ENCODE measurements at regions of chr11 and their contacts with region 1.

Region 1: GRCh38 chr11:86174101-86175046 is 70.2 kb upstream of the EED start:
- DNase-seq: no peak
- ATAC-seq: no peak
- H3K4me3 ChIP-seq: no peak overlapping the region
- H3K27ac ChIP-seq: no peak overlapping the region
- H3K4me1 ChIP-seq: no peaks in the 10 kb centered on the region
- H3K27me3 ChIP-seq: no peaks in the 10 kb centered on the region
- CTCF ChIP-seq: no peak
- EP300 ChIP-seq: no peak
- POLR2A ChIP-seq: no peak
- RAD21 ChIP-seq: no peak

Region 2: DNA sequence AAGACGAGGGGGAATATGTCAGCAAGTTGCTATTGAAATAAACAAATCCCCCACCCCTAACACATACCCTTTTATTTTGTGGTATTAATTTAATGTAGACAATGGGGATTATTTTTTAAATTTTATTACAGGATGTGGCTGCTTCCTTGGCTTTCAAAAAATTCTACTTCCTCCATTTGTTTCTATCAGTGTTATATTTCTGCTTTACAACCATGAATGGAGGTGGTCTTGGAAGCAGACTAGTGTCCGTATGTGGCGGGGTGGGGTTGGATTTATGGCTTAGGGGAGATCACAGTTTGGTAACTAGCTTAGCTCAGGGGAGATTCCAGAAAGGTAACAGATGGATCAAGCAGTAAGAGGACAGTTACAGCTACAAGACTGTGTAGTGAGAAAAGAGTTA is 66.2 kb before region 1 on chr11:
- CTCF ChIA-PET with region 1: no interaction called
- POLR2A ChIA-PET with region 1: no interaction called
- RAD21 ChIA-PET with region 1: no interaction called
- SMC1A ChIA-PET with region 1: no interaction called
- in situ Hi-C with region 1: no loop called
- intact Hi-C with region 1: no loop called
- DNase-seq: no peak
- ATAC-seq: peak; percentile 39; the same call in 1 of the 3 replicates
- H3K4me3 ChIP-seq: no peak overlapping the region
- H3K27ac ChIP-seq: no peak overlapping the region
- H3K4me1 ChIP-seq: no peaks in the 10 kb centered on the region
- H3K27me3 ChIP-seq: no peaks in the 10 kb centered on the region
- CTCF ChIP-seq: no peak
- EP300 ChIP-seq: no peak
- POLR2A ChIP-seq: no peak
- RAD21 ChIP-seq: no peak

Region 3: DNA sequence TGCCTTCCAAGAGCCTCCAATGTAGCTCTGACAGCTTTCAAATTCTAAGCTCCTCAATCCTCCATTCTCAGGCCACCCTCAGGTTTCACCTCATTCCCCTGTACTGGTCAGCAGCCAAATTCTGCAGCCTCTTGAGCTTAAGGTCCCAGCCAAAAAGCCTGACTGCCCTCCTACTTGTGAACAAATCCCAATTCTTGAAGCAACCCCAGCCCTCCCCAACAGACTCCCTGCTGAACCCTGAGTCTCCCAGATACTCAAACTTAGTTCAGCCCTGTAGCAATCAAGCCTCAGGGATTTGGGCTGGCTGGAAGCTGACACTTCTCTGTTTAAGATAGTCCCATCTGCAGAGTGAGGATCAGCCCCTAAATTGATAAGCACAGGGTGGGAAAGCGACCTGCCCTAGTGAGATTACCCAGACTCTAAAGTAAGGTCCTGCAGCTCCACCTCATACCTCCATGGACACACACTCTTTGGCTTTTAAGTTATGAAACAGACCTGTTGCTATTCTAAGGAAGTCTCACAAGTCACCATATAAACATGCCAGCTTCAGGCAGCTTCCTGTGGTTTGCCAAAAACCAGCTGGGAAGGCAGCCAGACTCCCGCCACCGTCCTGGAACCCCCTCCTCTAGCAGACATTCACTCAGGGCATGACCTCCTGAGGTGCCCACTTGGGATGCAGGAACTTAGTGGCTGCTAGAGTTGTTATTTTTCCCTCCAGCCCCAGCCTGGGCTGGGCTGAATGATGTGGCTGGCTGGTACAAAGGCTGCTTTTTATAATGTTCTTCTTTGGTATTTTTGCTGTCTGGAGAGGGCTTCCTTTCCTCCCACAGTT is 23.0 kb before region 1 on chr11:
- CTCF ChIA-PET with region 1: no interaction called
- POLR2A ChIA-PET with region 1: interaction called, 10 read pairs
- RAD21 ChIA-PET with region 1: no interaction called
- SMC1A ChIA-PET with region 1: no interaction called
- in situ Hi-C with region 1: no loop called
- intact Hi-C with region 1: no loop called
- DNase-seq: no peak
- ATAC-seq: peak; percentile 73
- H3K4me3 ChIP-seq: no peak overlapping the region
- H3K27ac ChIP-seq: no peak overlapping the region
- H3K4me1 ChIP-seq: peaks cover 16% of the 10 kb centered on the region
- H3K27me3 ChIP-seq: no peaks in the 10 kb centered on the region
- CTCF ChIP-seq: no peak
- EP300 ChIP-seq: no peak
- POLR2A ChIP-seq: no peak
- RAD21 ChIP-seq: no peak